ENCODE measurements at regions of chr13 and their contacts with region 1.

Region 1: GRCh38 chr13:46614582-46614981 is 61.6 kb downstream of the LRCH1 start:
- DNase-seq: no peak
- ATAC-seq: peak in 1 of 2 donors; percentile 45
- H3K4me3 ChIP-seq: no peak overlapping the region
- H3K27ac ChIP-seq: no peak overlapping the region
- H3K4me1 ChIP-seq: peaks cover 7% of the 10 kb centered on the region
- H3K27me3 ChIP-seq: no peaks in the 10 kb centered on the region

Region 2: GRCh38 chr13:46229251-46229650 is 385.3 kb before region 1 on chr13:
- intact Hi-C with region 1: no loop called
- DNase-seq: no peak
- ATAC-seq: no peak
- H3K4me3 ChIP-seq: no peak overlapping the region
- H3K27ac ChIP-seq: no peak overlapping the region
- H3K4me1 ChIP-seq: no peaks in the 10 kb centered on the region
- H3K27me3 ChIP-seq: no peaks in the 10 kb centered on the region

Region 3: DNA sequence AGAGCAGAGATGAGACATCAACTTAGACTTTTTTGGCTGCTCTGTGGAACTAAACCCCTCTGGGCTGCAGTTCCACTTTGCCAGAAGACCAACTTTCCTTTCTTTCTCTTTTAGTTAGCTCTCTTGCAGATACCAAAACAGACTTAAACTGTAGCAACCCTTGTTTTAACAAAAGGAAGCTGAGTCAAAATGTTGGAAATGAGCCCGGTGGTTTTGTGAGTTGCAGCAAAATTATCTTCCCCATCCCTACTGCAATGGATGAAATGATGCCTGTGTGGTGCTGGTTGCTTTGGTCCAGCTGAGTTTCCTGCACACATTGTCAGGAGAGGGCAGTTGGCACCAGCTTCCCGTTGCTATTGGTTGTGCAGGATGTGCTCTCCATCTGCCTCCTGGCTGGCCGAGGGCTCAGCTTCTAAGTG is 53.7 kb after region 1 on chr13:
- intact Hi-C with region 1: loop called in 1 of 4 experiments (anchors 10 kb)
- DNase-seq: peak; percentile 42 to 67 (median 66)
- ATAC-seq: peak; percentile 33 to 84
- H3K4me3 ChIP-seq: no peak overlapping the region
- H3K27ac ChIP-seq: peak overlapping the region; percentile 52
- H3K4me1 ChIP-seq: peaks cover 16% of the 10 kb centered on the region
- H3K27me3 ChIP-seq: no peaks in the 10 kb centered on the region

Measured in right cardiac atrium (tissue), 5 donors.